H1 (cell line): ENCODE measurements at regions of chr1 and their contacts with region 1.

Region 1: GRCh38 chr1:113949007-113949406 is 19.9 kb downstream of the HIPK1 start:
- DNase-seq: no peak
- H3K4me3 ChIP-seq: no peak overlapping the region
- H3K27ac ChIP-seq: no peak overlapping the region
- H3K4me1 ChIP-seq: no peaks in the 10 kb centered on the region
- H3K27me3 ChIP-seq: no peaks in the 10 kb centered on the region
- CTCF ChIP-seq: peak in 1 of 3 experiments; percentile 21; a peak in 1 of 4 replicates
- EP300 ChIP-seq: no peak
- POLR2A ChIP-seq: no peak
- RAD21 ChIP-seq: no peak; a peak in 1 of 4 replicates

Region 2: GRCh38 chr1:113963281-113963906 is 14.4 kb after region 1 on chr1:
- CTCF ChIA-PET with region 1: interaction called, 31 read pairs
- POLR2A ChIA-PET with region 1: interaction called, 4 read pairs
- DNase-seq: no peak
- H3K4me3 ChIP-seq: no peak overlapping the region
- H3K27ac ChIP-seq: no peak overlapping the region
- H3K4me1 ChIP-seq: no peaks in the 10 kb centered on the region; a peak in 2 of 7 replicates
- H3K27me3 ChIP-seq: no peaks in the 10 kb centered on the region
- CTCF ChIP-seq: peak in 1 of 3 experiments; percentile 4; a peak in 1 of 4 replicates
- EP300 ChIP-seq: no peak
- POLR2A ChIP-seq: no peak
- RAD21 ChIP-seq: peak; percentile 29 to 37; a peak in 2 of 4 replicates

Region 3: GRCh38 chr1:113998327-113998726 is 49.3 kb after region 1 on chr1:
- CTCF ChIA-PET with region 1: no interaction called
- POLR2A ChIA-PET with region 1: no interaction called
- DNase-seq: no peak
- H3K4me3 ChIP-seq: no peak overlapping the region
- H3K27ac ChIP-seq: no peak overlapping the region
- H3K4me1 ChIP-seq: peaks cover 3 to 16% (median 11%) of the 10 kb centered on the region in 4 experiments
- H3K27me3 ChIP-seq: no peaks in the 10 kb centered on the region; a peak in 1 of 7 replicates
- CTCF ChIP-seq: no peak
- EP300 ChIP-seq: no peak
- POLR2A ChIP-seq: no peak
- RAD21 ChIP-seq: no peak